OCI-LY7 (cell line): ENCODE measurements at regions of chr5 and their contacts with region 1.

Region 1: DNA sequence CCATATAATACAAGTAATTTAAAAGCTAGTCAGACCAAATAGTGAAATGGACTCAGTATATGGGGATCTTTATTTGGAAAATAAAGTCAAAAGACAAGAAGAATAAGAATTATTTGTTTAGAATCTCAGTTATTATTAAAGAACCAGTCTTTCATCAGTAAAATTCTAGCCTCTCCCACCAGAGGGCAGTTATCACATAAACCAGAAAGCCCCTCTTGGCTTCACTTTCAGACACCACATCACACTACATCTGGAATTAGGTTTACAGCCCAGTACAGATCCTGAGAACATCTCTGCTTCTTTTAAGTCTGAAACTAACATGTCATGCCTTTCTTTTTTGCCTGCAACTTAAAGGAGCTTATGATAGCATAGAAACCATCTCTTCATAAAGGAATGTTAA is 12.2 kb upstream of the HSPB3 start:
- DNase-seq: peak; percentile 63
- H3K4me3 ChIP-seq: no peak overlapping the region
- H3K27ac ChIP-seq: no peak overlapping the region
- H3K4me1 ChIP-seq: peaks cover 33% of the 10 kb centered on the region
- CTCF ChIP-seq: peak; percentile 85

Region 2: DNA sequence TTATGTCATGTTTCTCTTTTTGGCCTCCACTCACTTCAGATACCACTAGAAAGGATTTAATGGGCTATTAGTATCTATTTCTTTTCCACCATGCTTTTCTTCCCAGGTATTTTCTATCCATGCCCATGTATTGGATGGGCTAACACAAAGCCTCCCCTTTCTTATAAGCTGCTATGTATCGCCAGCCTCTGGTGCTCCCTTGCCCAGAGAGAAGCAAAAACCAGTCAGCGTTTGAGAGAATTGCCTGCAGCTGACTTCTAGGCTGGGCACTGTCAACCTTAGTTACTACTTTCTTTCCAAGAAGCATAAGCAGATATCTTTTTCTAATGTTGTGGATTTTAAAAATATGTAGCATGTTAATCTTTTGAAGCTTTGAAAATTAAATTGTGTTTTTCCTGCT is 18.0 kb before region 1 on chr5:
- CTCF ChIA-PET with region 1: no interaction called
- POLR2A ChIA-PET with region 1: interaction called, 10 read pairs
- intact Hi-C with region 1: no loop called
- DNase-seq: no peak
- H3K4me3 ChIP-seq: no peak overlapping the region
- H3K27ac ChIP-seq: no peak overlapping the region
- H3K4me1 ChIP-seq: no peaks in the 10 kb centered on the region
- CTCF ChIP-seq: no peak

Region 3: DNA sequence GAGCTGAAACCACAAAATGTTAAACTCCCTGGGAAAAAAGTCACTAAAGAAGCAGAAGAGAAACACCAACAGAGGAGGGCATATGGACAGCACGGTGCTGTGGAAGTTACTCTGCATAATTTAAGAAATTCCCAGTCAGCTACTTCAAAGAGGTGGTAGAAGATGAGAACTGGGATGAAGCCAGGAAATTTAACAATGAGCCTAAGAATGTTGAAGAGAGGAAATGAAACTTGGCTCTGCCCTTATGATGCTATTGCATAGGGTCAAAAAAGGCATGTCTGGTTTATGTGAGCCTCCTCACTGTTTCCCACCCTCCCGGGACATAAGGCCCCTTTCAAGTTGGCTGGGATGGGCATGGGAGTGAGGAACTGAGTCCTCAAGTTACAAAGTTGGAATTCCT is 48.9 kb after region 1 on chr5:
- CTCF ChIA-PET with region 1: interaction called, 8 read pairs
- POLR2A ChIA-PET with region 1: interaction called, 4 read pairs
- intact Hi-C with region 1: loop called (anchors 1 kb)
- DNase-seq: no peak
- H3K4me3 ChIP-seq: no peak overlapping the region
- H3K27ac ChIP-seq: no peak overlapping the region
- H3K4me1 ChIP-seq: no peaks in the 10 kb centered on the region
- CTCF ChIP-seq: no peak